ENCODE measurements at regions of chr1 and their contacts with region 1.

Region 1: DNA sequence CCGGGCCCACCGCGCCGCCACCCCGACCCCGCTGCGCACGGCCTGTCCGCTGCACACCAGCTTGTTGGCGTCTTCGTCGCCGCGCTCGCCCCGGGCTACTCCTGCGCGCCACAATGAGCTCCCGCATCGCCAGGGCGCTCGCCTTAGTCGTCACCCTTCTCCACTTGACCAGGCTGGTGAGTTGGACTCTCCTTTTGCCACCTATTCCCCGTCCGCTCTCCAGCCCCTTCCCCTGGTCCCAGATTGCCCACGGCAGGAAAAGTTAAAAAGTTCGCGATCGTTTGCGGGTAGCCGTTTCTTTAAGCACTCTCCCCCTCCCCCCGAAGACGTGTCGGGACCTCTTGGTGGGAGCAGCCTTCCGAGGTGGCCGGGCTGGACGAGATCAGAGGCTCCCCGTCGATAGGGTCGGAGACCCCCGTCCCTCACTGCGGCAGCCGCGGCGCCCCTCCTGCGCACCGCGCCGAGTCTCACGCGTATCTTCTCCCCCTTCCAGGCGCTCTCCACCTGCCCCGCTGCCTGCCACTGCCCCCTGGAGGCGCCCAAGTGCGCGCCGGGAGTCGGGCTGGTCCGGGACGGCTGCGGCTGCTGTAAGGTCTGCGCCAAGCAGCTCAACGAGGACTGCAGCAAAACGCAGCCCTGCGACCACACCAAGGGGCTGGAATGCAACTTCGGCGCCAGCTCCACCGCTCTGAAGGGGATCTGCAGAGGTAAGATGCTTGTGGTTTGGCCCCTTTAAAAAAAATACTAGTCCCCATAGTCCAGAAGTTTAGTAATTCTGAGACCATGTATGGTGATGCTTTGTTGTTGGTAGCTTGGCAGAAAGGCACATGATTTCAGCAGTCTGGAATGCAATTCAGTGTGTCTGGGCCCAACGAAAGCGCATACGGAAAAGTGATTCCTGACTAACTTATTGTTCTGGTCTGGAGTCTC is 576 bp downstream of the CCN1 start:
- H3K4me3 ChIP-seq: peak overlapping the region; percentile 98
- H3K27ac ChIP-seq: peak overlapping the region; percentile 87
- H3K4me1 ChIP-seq: peaks cover 16% of the 10 kb centered on the region
- CTCF ChIP-seq: peak; percentile 96

Region 2: GRCh38 chr1:85307987-85308832 is 272.9 kb before region 1 on chr1:
- CTCF ChIA-PET with region 1: interaction called, 24 read pairs
- POLR2A ChIA-PET with region 1: interaction called, 10 read pairs
- H3K4me3 ChIP-seq: no peak overlapping the region
- H3K27ac ChIP-seq: no peak overlapping the region
- H3K4me1 ChIP-seq: 0 out of 2 replicates have a peak, but pooled peaks cover 3% of the 10 kb centered on the region
- CTCF ChIP-seq: peak; percentile 97

Region 3: GRCh38 chr1:85464497-85465098 is 116.5 kb before region 1 on chr1:
- CTCF ChIA-PET with region 1: interaction called, 7 read pairs
- POLR2A ChIA-PET with region 1: interaction called, 40 read pairs
- H3K4me3 ChIP-seq: peak overlapping the region; percentile 92
- H3K27ac ChIP-seq: peak overlapping the region; percentile 89
- H3K4me1 ChIP-seq: peaks cover 6% of the 10 kb centered on the region; the same call in 1 of the 2 replicates
- CTCF ChIP-seq: no peak; the same call in 1 of the 2 replicates

Region 4: DNA sequence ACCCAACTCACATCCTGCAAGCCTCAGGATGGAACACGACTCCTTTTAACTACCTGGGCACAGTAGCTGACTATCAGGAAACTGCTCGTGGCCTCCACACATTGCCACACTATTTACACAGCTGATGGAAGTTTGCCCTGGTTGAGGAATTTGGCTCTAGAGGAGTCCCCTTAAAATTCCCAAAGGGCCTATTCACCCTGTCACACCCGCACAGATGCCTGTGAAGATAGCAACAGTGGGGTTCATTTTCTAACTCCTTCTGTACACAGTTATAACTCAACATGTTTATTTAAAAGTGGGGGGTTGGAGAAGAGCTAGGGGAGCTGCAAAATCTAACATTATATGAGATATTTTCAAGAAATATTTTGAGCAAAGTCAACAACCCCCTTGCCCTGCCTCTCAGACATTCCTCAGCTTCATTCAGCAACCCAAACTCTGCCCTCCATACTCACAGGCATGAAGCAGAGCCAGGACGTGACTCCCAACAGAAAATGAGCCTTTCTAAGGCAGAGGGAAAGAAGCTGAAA is 36.4 kb before region 1 on chr1:
- CTCF ChIA-PET with region 1: no interaction called
- POLR2A ChIA-PET with region 1: no interaction called
- H3K4me3 ChIP-seq: no peak overlapping the region
- H3K27ac ChIP-seq: no peak overlapping the region; the same call in 1 of the 2 replicates
- H3K4me1 ChIP-seq: 0 out of 2 replicates have a peak, but pooled peaks cover 6% of the 10 kb centered on the region
- CTCF ChIP-seq: no peak

Region 5: GRCh38 chr1:85599076-85599491 is 17.9 kb after region 1 on chr1:
- CTCF ChIA-PET with region 1: interaction called, 39 read pairs
- POLR2A ChIA-PET with region 1: interaction called, 120 read pairs
- H3K4me3 ChIP-seq: no peak overlapping the region
- H3K27ac ChIP-seq: no peak overlapping the region
- H3K4me1 ChIP-seq: no peaks in the 10 kb centered on the region
- CTCF ChIP-seq: no peak

Region 6: GRCh38 chr1:85612704-85613361 is 31.7 kb after region 1 on chr1:
- CTCF ChIA-PET with region 1: interaction called, 39 read pairs
- POLR2A ChIA-PET with region 1: interaction called, 120 read pairs
- H3K4me3 ChIP-seq: no peak overlapping the region
- H3K27ac ChIP-seq: no peak overlapping the region
- H3K4me1 ChIP-seq: no peaks in the 10 kb centered on the region
- CTCF ChIP-seq: no peak

Region 7: GRCh38 chr1:85707990-85708828 is 127.1 kb after region 1 on chr1 and contains the start of gene ZNHIT6:
- CTCF ChIA-PET with region 1: interaction called, 3 read pairs
- POLR2A ChIA-PET with region 1: interaction called, 16 read pairs
- H3K4me3 ChIP-seq: peak within 1 kb of the TSS; percentile 77
- H3K27ac ChIP-seq: peak within 1 kb of the TSS; percentile 62
- H3K4me1 ChIP-seq: 0 out of 2 replicates have a peak, but pooled peaks cover 3% of the 10 kb centered on the region
- CTCF ChIP-seq: peak; percentile 58

Measured in HEK293 (cell line).